ENCODE measurements at regions of chr7 and their contacts with region 1.

Region 1: GRCh38 chr7:35906191-35906908 is 105.5 kb downstream of the SEPTIN7 start:
- DNase-seq: peak; percentile 77
- H3K4me3 ChIP-seq: no peak overlapping the region
- H3K27ac ChIP-seq: no peak overlapping the region
- H3K4me1 ChIP-seq: peaks cover 4% of the 10 kb centered on the region
- H3K27me3 ChIP-seq: no peaks in the 10 kb centered on the region
- CTCF ChIP-seq: peak; percentile 76 to 94 (median 91)
- POLR2A ChIP-seq: no peak

Region 2: DNA sequence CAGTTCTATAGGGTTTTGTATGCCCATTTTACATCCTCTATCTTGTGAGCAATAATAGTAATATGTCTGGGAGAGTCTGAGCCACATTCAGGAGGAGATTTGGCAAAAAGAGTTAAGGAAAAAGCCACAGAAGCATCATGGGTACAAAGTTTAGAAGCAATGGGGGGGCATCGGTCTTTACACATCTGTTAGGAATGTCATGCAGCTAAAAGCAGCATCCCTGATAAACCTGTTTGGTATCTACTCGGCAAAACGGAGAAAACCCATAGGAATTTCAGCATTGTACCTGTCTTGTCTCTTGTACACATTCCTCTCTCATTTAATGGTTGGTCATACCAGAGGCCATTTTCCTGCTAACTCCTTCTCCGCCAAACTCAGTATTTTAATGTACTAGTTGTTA is 198.9 kb before region 1 on chr7:
- intact Hi-C with region 1: loop called (anchors 5 kb)
- DNase-seq: no peak
- H3K4me3 ChIP-seq: no peak overlapping the region
- H3K27ac ChIP-seq: no peak overlapping the region
- H3K4me1 ChIP-seq: peaks cover 6% of the 10 kb centered on the region
- H3K27me3 ChIP-seq: no peaks in the 10 kb centered on the region
- CTCF ChIP-seq: no peak
- POLR2A ChIP-seq: no peak

Region 3: DNA sequence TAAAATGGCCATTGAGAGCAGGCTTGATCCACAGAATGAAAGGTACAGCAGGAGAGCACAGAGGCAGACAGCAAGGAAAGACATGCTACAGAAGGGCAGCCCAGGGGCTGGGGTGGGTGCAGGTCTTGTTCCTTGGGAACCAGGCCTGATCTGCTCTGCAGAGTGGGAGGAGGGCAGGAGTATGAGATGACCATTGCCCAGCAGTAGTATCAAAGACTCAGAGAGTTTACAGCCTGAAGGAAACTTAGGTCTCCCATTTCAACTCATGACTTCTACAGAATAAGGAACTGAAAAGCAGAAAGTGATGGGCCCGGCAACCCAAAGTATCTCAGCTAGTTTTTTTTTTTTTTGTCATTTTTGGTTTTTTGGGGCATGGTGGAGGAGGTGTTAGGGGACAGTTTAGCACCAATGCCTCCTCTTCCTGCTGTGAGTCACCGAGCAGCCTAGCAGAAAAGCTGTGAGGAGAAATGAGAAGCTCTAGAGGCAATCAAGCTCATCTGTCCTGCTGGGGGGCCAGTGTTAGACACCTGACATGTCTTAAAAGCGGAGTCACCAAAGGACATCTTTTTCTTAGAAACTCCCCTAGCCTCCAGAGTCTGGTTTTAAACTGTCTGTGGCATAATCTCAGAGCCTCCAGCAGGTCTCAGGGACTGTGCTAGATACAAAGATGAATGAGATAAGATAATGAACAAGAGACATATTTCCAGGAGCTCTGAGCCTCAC is 177.1 kb before region 1 on chr7:
- intact Hi-C with region 1: no loop called
- DNase-seq: no peak
- H3K4me3 ChIP-seq: no peak overlapping the region
- H3K27ac ChIP-seq: no peak overlapping the region
- H3K4me1 ChIP-seq: peaks cover 5% of the 10 kb centered on the region
- H3K27me3 ChIP-seq: no peaks in the 10 kb centered on the region
- CTCF ChIP-seq: no peak
- POLR2A ChIP-seq: no peak

Region 4: DNA sequence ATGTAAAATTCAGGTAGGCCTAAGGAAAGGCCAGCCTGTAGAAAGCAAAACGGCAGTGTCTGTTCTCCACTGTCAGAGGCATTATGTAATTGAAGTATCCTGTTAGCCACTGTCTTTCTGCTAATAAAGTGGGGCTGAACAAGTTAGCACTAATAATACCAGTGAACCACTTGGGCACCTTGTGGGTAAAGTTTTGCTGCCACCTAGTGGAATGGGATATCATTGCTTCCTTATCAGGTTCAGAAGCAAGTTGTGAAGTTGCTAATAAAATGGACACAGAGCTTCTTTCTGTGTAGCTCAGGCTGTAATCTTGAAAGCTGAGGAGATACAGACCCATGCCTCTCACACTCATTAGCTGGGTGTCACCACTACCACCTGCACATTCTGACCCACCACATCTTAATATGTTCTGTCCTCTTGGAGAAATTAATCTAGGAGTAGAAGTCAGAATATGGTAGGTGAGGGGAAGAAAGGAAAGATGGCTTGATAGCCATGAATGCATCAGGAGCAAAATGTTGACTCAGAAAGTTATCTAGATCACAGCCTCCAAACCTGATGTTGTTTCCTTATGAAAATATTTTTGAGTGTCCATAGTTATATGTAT is 69.6 kb after region 1 on chr7:
- intact Hi-C with region 1: loop called (anchors 10 kb)
- DNase-seq: peak; percentile 69
- H3K4me3 ChIP-seq: no peak overlapping the region
- H3K27ac ChIP-seq: no peak overlapping the region
- H3K4me1 ChIP-seq: no peaks in the 10 kb centered on the region
- H3K27me3 ChIP-seq: no peaks in the 10 kb centered on the region
- CTCF ChIP-seq: peak; percentile 34 to 85 (median 76)
- POLR2A ChIP-seq: no peak